CD4-positive, alpha-beta T cell (primary cell): ENCODE measurements at regions of chr16 and their contacts with region 1.

Region 1: GRCh38 chr16:12079412-12079965 is 103.0 kb downstream of the SNX29 start:
- DNase-seq: peak in 4 of 14 experiments; percentile 29 to 68 (median 44)
- ATAC-seq: peak; percentile 30
- H3K4me3 ChIP-seq: peak overlapping the region; percentile 43
- H3K4me3 Mint-ChIP-seq: peak overlapping the region; percentile 79
- H3K27ac ChIP-seq: peak overlapping the region; percentile 66 to 71
- H3K27ac Mint-ChIP-seq: peak overlapping the region; percentile 87
- H3K4me1 ChIP-seq: peaks cover 81% of the 10 kb centered on the region
- H3K4me1 Mint-ChIP-seq: peaks cover 85% of the 10 kb centered on the region
- H3K27me3 ChIP-seq: no peaks in the 10 kb centered on the region
- H3K27me3 Mint-ChIP-seq: no peaks in the 10 kb centered on the region
- CTCF ChIP-seq: no peak

Region 2: DNA sequence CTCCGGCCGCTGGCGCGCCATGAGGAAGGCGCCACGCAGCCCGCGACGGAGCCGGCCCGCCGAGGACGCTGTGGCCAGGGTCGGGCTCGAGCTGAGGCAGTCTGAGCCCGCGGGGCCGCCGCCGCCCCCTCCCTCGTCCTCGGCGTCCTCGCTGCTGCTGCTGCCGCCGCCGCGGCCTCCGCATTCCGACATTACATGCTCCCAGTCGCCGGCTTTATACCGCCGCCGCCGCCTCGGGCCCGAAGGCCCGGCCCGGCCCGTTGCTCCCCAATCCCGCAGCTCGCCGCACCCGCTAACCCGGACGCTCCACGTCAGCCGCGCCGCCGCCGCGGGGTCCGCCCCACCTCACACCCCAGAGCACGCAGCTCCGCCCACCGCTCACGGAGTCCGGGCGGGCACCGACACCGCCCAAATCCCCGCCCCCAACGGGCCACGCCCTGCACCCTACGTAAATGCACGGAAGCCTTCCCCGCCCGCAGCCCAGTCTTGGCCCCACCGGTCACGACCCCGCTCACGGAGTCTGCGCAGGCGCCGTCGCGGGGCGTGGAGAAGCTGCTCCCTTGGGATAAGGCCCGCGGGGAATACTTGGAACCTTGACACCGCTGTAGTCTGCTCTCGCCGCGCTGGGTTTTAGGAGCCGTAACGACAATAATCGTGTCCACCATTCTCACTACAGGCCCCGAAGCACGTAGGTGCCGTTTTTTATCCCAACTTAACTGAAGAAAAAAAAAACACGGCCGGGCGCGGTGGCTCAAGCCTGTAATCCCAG is 336.8 kb before region 1 on chr16 and contains the start of gene TXNDC11:
- CTCF ChIA-PET with region 1: no interaction called
- POLR2A ChIA-PET with region 1: no interaction called
- intact Hi-C with region 1: no loop called
- DNase-seq: peak; percentile 98 to 100 (median 99)
- ATAC-seq: peak; percentile 92
- H3K4me3 ChIP-seq: peak within 1 kb of the TSS; percentile 95
- H3K4me3 Mint-ChIP-seq: peak within 1 kb of the TSS; percentile 96
- H3K27ac ChIP-seq: peak within 1 kb of the TSS; percentile 86 to 92
- H3K27ac Mint-ChIP-seq: peak within 1 kb of the TSS; percentile 99
- H3K4me1 ChIP-seq: peaks cover 52% of the 10 kb centered on the region
- H3K4me1 Mint-ChIP-seq: peaks cover 60% of the 10 kb centered on the region
- H3K27me3 ChIP-seq: no peaks in the 10 kb centered on the region
- H3K27me3 Mint-ChIP-seq: no peaks in the 10 kb centered on the region
- CTCF ChIP-seq: no peak
- total RNA-seq, gene TXNDC11: 111 to 112 TPM

Region 3: DNA sequence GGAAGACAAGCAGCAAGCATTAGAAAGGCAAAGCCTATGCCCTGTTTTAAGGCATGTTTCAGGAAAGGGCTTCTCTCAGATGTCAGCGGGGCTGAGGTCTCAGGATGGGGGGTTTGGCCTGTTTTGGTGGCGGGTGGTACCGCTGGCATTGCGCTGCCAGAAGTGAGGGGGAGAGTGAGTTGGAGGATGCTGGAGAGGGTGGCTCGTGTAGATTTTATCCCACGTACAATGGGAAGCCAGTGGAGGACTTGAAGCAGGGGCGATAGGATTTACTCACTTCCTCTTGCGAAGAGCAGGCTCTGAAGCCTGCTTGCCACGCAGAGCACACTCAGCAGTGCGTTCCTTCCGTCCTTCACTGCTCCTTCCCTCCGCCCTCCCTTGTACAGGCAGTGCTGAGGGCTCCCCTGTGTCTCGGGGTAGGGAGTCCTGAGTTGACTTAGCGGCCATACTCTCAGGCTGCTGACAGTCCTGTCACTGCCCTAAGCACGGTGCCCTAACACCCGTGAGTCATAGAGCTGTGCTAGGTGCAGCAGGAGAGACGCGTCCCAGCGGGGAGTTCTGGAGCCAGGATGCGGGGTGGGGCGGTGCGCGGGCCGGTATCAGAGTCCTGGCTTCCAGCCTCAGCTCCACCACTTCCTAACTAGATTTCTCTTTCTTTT is 10.1 kb after region 1 on chr16:
- CTCF ChIA-PET with region 1: interaction called, 46 read pairs
- POLR2A ChIA-PET with region 1: interaction called, 26 read pairs
- intact Hi-C with region 1: loop called in 1 of 2 experiments (anchors 1 kb)
- DNase-seq: peak in 12 of 14 experiments; percentile 17 to 69 (median 36)
- ATAC-seq: peak; percentile 95
- H3K4me3 ChIP-seq: peak overlapping the region; percentile 45
- H3K4me3 Mint-ChIP-seq: peak overlapping the region; percentile 83
- H3K27ac ChIP-seq: peak overlapping the region; percentile 14 to 54
- H3K27ac Mint-ChIP-seq: peak overlapping the region; percentile 94
- H3K4me1 ChIP-seq: peaks cover 33% of the 10 kb centered on the region
- H3K4me1 Mint-ChIP-seq: peaks cover 59% of the 10 kb centered on the region
- H3K27me3 ChIP-seq: no peaks in the 10 kb centered on the region
- H3K27me3 Mint-ChIP-seq: no peaks in the 10 kb centered on the region
- CTCF ChIP-seq: no peak

Region 4: DNA sequence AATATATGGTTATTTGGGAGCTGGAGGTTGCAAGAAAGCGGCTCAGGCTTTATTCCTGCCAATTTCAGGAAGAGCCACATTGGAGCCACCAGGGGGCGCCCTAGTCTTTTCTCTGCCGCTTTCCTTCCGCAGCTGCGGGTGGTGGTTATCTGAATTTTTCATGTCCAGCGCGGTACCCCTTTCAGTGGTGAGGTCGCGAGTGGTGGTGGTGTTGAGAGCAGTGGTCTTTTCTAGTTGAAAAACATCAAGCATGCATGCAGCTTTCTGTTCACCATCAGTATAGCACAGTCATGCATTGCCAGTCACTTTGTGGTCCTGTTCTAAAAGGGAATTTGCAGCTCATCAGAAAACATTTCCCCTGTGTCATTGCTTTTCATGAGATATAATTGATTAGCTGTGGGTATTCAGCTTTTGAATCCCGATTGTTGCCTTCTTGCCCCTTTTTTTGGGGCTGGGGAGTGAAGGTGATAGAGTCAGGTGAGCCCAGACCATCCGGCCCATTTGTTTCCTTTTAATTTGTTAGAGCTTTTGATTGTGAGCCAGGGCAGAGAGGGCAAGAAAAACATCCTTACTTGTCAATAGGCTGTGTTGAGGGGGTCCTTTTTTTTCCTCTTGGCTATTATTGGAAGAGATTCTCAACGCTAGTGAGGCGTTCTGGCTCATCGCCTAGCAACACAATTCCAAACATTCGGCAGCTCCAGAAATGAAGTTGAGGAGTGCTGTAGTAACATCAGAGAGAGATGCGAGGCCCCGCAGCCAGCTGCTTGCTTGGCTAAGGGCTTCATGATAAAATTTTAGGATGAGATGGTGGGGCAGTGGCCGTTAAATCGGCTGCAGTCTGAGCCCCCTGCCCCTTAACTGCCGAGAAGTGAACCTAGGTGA is 16.0 kb after region 1 on chr16:
- CTCF ChIA-PET with region 1: interaction called, 46 read pairs
- POLR2A ChIA-PET with region 1: interaction called, 26 read pairs
- intact Hi-C with region 1: no loop called
- DNase-seq: peak; percentile 48 to 83 (median 60)
- ATAC-seq: peak; percentile 54
- H3K4me3 ChIP-seq: no peak overlapping the region
- H3K4me3 Mint-ChIP-seq: peak overlapping the region; percentile 77
- H3K27ac ChIP-seq: no peak overlapping the region
- H3K27ac Mint-ChIP-seq: no peak overlapping the region
- H3K4me1 ChIP-seq: peaks cover 14% of the 10 kb centered on the region
- H3K4me1 Mint-ChIP-seq: peaks cover 50% of the 10 kb centered on the region
- H3K27me3 ChIP-seq: no peaks in the 10 kb centered on the region
- H3K27me3 Mint-ChIP-seq: no peaks in the 10 kb centered on the region
- CTCF ChIP-seq: peak; percentile 94

Region 5: GRCh38 chr16:12803203-12804097 is 724.0 kb after region 1 on chr16 and contains the start of gene CPPED1:
- CTCF ChIA-PET with region 1: no interaction called
- POLR2A ChIA-PET with region 1: interaction called, 8 read pairs
- intact Hi-C with region 1: loop called (anchors 1 to 5 kb)
- DNase-seq: peak; percentile 82 to 95 (median 88)
- ATAC-seq: peak; percentile 95
- H3K4me3 ChIP-seq: peak within 1 kb of the TSS; percentile 83
- H3K4me3 Mint-ChIP-seq: peak within 1 kb of the TSS; percentile 93
- H3K27ac ChIP-seq: peak within 1 kb of the TSS; percentile 71 to 80
- H3K27ac Mint-ChIP-seq: peak within 1 kb of the TSS; percentile 87
- H3K4me1 ChIP-seq: peaks cover 17% of the 10 kb centered on the region
- H3K4me1 Mint-ChIP-seq: peaks cover 23% of the 10 kb centered on the region
- H3K27me3 ChIP-seq: no peaks in the 10 kb centered on the region
- H3K27me3 Mint-ChIP-seq: no peaks in the 10 kb centered on the region
- CTCF ChIP-seq: no peak
- total RNA-seq, gene CPPED1: 1.4 to 2.3 TPM